PC-3 (cell line): ENCODE measurements at regions of chr22 and their contacts with region 1.

Region 1: GRCh38 chr22:28882878-28883656 is at the start of gene ZNRF3:
- DNase-seq: peak; percentile 83
- ATAC-seq: peak; percentile 67
- H3K4me3 ChIP-seq: peak within 1 kb of the TSS; percentile 93
- H3K27ac ChIP-seq: peak within 1 kb of the TSS; percentile 31
- H3K4me1 ChIP-seq: peaks cover 28% of the 10 kb centered on the region
- H3K27me3 ChIP-seq: no peaks in the 10 kb centered on the region
- CTCF ChIP-seq: no peak
- total RNA-seq, gene ZNRF3: 8.1 and 9.4 TPM in 2 replicates

Region 2: GRCh38 chr22:28846994-28847393 is 36.1 kb before region 1 on chr22:
- CTCF ChIA-PET with region 1: no interaction called
- POLR2A ChIA-PET with region 1: no interaction called
- intact Hi-C with region 1: no loop called
- DNase-seq: no peak
- ATAC-seq: no peak
- H3K4me3 ChIP-seq: no peak overlapping the region
- H3K27ac ChIP-seq: no peak overlapping the region
- H3K4me1 ChIP-seq: no peaks in the 10 kb centered on the region
- H3K27me3 ChIP-seq: no peaks in the 10 kb centered on the region
- CTCF ChIP-seq: no peak

Region 3: DNA sequence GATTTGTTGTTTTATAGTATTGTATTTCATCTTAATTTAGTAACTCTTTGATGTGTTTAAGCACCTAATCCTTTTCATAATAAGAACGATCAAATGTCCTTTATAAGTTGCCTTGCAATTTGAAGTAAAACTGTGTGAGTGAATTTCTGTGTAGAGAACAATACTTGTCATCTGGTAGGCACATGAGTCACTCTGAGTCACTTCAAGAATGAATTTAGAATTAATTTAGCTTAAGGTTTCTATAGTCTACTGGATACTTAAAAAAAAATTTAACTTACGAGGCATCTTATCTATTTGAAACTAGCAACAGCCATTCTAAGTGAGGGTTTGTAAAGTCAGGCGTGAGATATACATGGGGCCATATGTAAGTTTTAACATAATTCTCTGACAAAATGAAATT is 93.5 kb after region 1 on chr22:
- CTCF ChIA-PET with region 1: no interaction called
- POLR2A ChIA-PET with region 1: no interaction called
- intact Hi-C with region 1: loop called (anchors 10 kb)
- DNase-seq: peak; percentile 74
- ATAC-seq: peak; percentile 85
- H3K4me3 ChIP-seq: no peak overlapping the region
- H3K27ac ChIP-seq: 0 out of 2 replicates have a peak overlapping the region, but pooled peaks have one; percentile 2
- H3K4me1 ChIP-seq: peaks cover 25% of the 10 kb centered on the region
- H3K27me3 ChIP-seq: no peaks in the 10 kb centered on the region
- CTCF ChIP-seq: no peak